Tibial artery (tissue), 4 donors: ENCODE measurements at regions of chr11 and their contacts with region 1.

Region 1: GRCh38 chr11:44911029-44911814 is 39.5 kb downstream of the TP53I11 start:
- DNase-seq: peak; percentile 82 to 90
- H3K4me3 ChIP-seq: no peak overlapping the region
- H3K27ac ChIP-seq: peak overlapping the region in 1 of 2 donors; percentile 36
- H3K4me1 ChIP-seq: peaks cover 0 to 20% (median 13%) of the 10 kb centered on the region in 4 donors
- H3K27me3 ChIP-seq: no peaks in the 10 kb centered on the region
- CTCF ChIP-seq: peak; percentile 81 to 88

Region 2: GRCh38 chr11:44550123-44550522 is 361.1 kb before region 1 on chr11:
- intact Hi-C with region 1: loop called (anchors 5 kb)
- DNase-seq: no peak
- H3K4me3 ChIP-seq: no peak overlapping the region
- H3K27ac ChIP-seq: no peak overlapping the region
- H3K4me1 ChIP-seq: no peaks in the 10 kb centered on the region
- H3K27me3 ChIP-seq: no peaks in the 10 kb centered on the region
- CTCF ChIP-seq: no peak

Region 3: DNA sequence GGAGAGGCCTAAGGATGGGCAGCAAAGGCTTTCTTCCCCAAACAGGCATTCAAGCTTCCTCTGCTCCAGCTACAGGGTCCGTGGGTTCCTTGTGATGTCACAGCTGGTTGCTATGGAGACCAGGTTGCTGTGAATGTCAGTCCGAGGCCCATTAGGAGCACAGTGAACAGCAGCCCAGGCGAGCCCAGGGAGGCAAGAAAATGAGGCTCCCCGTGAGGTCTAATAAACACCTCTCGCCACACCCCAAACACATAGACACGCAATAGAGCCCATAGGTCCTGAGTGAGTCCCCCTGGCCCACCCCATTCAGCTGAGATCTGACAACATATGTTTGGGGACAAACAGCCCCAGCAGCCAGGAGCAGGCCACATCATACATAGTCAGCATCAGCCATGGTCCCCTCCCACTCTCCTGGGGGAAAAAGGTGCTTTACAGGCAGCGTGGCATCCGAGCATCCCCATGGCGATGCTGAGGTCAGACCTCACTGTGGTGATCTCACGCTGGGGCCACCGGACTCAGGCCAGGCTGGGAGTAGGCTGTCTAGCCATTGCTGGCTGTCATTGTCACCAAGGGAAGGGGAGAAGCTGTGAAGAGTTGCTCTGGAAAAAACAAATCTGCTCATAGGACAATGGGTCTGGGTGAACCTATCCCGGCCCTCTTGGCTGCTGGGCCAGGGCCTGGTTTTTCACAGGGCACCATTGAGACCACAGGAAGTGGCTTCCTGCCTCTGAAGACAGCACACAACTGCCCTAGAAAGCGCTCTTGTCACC is 62.6 kb after region 1 on chr11:
- intact Hi-C with region 1: no loop called
- DNase-seq: no peak
- H3K4me3 ChIP-seq: no peak overlapping the region
- H3K27ac ChIP-seq: no peak overlapping the region
- H3K4me1 ChIP-seq: peaks cover 0 to 20% (median 7%) of the 10 kb centered on the region in 4 donors
- H3K27me3 ChIP-seq: no peaks in the 10 kb centered on the region
- CTCF ChIP-seq: no peak